ENCODE measurements at regions of chr2 and their contacts with region 1.

Region 1: GRCh38 chr2:106104332-106105062 is 89.6 kb downstream of the UXS1 start:
- DNase-seq: no peak

Region 2: GRCh38 chr2:106542811-106543259 is 438.3 kb after region 1 on chr2:
- intact Hi-C with region 1: loop called in 1 of 2 experiments (anchors 10 kb)
- DNase-seq: peak; percentile 90

Region 3: GRCh38 chr2:106551417-106552130 is 447.1 kb after region 1 on chr2:
- intact Hi-C with region 1: loop called (anchors 10 kb)
- DNase-seq: no peak

Region 4: GRCh38 chr2:106582148-106583143 is 477.9 kb after region 1 on chr2:
- intact Hi-C with region 1: loop called in 1 of 2 experiments (anchors 5 kb)
- DNase-seq: no peak